AG04450 (cell line): ENCODE measurements at regions of chr2 and their contacts with region 1.

Region 1: GRCh38 chr2:46632349-46632748 is 153.0 kb downstream of the TMEM247 start:
- DNase-seq: no peak
- H3K4me3 ChIP-seq: no peak overlapping the region
- H3K27ac ChIP-seq: no peak overlapping the region
- H3K27me3 ChIP-seq: no peaks in the 10 kb centered on the region
- CTCF ChIP-seq: peak; percentile 69

Region 2: DNA sequence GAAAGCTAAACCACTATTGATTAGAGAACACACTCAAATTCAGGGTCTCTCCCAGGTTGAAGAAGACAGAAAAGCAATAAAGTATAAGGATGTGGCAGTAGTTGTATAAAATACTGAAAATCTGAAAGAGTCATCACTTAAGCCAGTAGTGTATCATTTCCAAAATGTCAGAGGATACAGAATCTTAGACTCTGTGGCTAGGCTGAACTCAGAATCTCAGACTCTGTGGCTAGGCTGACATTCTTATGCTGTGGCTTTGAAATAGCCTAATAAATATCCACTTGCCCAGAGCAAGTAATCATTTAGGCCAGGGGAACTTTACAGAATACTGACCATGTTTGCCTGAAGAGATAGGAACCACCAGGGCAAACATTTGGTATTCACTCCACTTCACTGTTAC is 270.1 kb after region 1 on chr2:
- CTCF ChIA-PET with region 1: interaction called, 10 read pairs
- POLR2A ChIA-PET with region 1: no interaction called
- DNase-seq: no peak
- H3K4me3 ChIP-seq: no peak overlapping the region
- H3K27ac ChIP-seq: no peak overlapping the region
- H3K27me3 ChIP-seq: no peaks in the 10 kb centered on the region
- CTCF ChIP-seq: no peak